ENCODE measurements at regions of chr1 and their contacts with region 1.

Region 1: GRCh38 chr1:114346480-114347029 is 164.4 kb downstream of the TRIM33 start:
- DNase-seq: peak; percentile 93 to 99 (median 97)
- H3K4me3 ChIP-seq: peak overlapping the region; percentile 54 to 71
- H3K4me3 Mint-ChIP-seq: peak overlapping the region; percentile 86 to 98 (median 94)
- H3K27ac ChIP-seq: no peak overlapping the region
- H3K27ac Mint-ChIP-seq: peak overlapping the region; percentile 81 to 98 (median 97)
- H3K4me1 ChIP-seq: peaks cover 46% of the 10 kb centered on the region
- H3K4me1 Mint-ChIP-seq: peaks cover 19 to 49% (median 35%) of the 10 kb centered on the region in 4 donors
- H3K27me3 ChIP-seq: no peaks in the 10 kb centered on the region
- H3K27me3 Mint-ChIP-seq: no peaks in the 10 kb centered on the region

Region 2: DNA sequence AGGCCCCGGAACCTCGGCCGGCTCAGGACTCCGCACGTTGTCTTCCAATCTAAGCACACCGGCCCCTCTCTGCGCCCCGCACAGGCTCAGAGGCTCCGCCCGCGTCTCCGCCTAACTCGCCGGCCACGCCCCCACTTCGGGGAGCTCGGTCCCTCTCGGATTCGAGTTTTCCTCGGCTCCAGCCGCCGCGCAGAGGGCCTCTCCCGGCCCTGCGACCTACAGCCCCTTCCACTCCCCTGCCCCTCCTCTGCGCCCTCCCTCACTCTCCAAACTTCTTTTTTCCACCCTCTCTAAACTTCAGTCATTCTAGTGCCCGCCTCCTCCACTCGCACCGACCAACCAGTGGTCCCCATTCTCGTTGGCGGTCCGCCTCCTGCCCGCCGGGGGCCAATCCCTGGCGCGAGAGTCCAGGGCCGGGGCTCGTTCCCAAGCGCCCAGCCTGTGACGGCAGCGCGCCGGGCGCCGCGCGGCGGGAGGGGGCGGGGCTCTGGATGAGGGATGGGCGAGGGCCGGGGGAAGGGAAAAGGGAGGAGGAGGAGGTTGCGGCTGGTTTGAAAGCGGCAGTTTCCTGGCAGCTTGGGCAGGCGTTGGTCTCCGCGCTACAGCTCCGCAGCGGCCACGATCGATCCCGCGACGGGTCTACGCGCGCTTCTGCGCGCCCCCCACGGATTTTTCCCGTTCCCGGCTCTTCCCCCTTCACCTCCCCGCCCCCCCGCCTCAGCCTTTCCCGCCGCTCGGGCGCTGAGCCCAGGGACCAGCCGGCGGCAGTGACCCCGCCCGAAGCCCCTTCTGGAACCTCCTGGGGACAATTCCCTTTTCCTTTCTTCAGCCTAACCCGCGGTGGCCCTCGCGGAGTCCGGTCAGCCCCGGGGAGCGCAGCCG is 956.4 kb before region 1 on chr1 and contains the start of gene MAGI3:
- CTCF ChIA-PET with region 1: no interaction called
- POLR2A ChIA-PET with region 1: no interaction called
- intact Hi-C with region 1: loop called (anchors 5 kb)
- DNase-seq: peak; percentile 92 to 94 (median 93)
- H3K4me3 ChIP-seq: peak within 1 kb of the TSS; percentile 44 to 89
- H3K4me3 Mint-ChIP-seq: peak within 1 kb of the TSS; percentile 88 to 98 (median 92)
- H3K27ac ChIP-seq: peak within 1 kb of the TSS; percentile 60
- H3K27ac Mint-ChIP-seq: peak within 1 kb of the TSS; percentile 80 to 95 (median 91)
- H3K4me1 ChIP-seq: peaks cover 30% of the 10 kb centered on the region
- H3K4me1 Mint-ChIP-seq: peaks cover 20 to 36% (median 23%) of the 10 kb centered on the region in 4 donors
- H3K27me3 ChIP-seq: no peaks in the 10 kb centered on the region
- H3K27me3 Mint-ChIP-seq: no peaks in the 10 kb centered on the region
- total RNA-seq, gene MAGI3: 6.5 to 6.7 TPM

Region 3: GRCh38 chr1:114330451-114330983 is 16.0 kb before region 1 on chr1:
- CTCF ChIA-PET with region 1: interaction called, 59 read pairs
- POLR2A ChIA-PET with region 1: interaction called, 79 read pairs
- intact Hi-C with region 1: loop called (anchors 1 kb)
- DNase-seq: peak; percentile 22 to 47 (median 35)
- H3K4me3 ChIP-seq: no peak overlapping the region
- H3K4me3 Mint-ChIP-seq: peak overlapping the region in 6 of 8 donors; percentile 4 to 74 (median 34)
- H3K27ac ChIP-seq: no peak overlapping the region
- H3K27ac Mint-ChIP-seq: peak overlapping the region in 6 of 7 donors; percentile 8 to 90 (median 86)
- H3K4me1 ChIP-seq: peaks cover 67% of the 10 kb centered on the region
- H3K4me1 Mint-ChIP-seq: peaks cover 44 to 73% (median 61%) of the 10 kb centered on the region in 4 donors
- H3K27me3 ChIP-seq: no peaks in the 10 kb centered on the region
- H3K27me3 Mint-ChIP-seq: peaks cover 0 to 1% of the 10 kb centered on the region in 2 donors

Region 4: DNA sequence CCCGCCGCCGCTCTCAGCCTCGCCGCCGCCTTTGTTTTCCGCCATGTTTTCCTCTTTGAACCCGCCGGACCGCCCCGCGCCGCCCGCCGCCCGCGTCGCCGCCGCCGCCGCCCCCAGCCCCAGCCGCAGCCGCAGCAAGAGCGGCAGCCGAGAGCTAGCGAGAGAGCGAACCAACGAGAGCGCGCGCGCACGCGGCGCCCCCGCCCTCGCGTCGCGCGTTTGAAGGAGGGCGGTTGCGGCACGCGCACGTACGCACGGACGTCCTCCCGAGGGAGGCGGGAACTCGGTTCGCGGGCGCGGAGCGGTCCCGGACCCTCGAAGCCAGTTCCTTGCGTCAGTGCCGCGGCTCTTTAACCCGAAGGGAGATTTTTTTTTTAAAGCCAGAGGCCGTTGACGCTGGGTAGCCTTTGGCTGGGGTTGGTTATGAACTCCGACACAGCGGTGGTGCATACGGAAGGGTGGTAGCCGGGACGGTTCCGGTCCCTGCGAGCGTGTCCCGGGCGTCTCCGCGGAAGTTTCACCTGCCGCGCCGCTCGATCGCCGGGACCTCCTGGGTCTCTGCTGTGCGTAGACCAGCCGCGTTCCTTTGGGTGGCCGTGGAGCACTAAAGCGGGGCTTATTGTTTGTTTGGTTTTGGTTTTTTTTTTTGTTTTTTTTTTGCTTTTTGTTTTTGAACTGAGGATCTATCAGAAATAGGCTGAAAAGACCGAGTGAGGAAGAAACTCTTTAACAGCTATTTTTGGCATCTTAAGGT is 164.7 kb after region 1 on chr1 and contains the start of gene TRIM33:
- CTCF ChIA-PET with region 1: interaction called, 6 read pairs
- POLR2A ChIA-PET with region 1: interaction called, 11 read pairs
- intact Hi-C with region 1: loop called (anchors 1 kb)
- DNase-seq: peak; percentile 91 to 95 (median 94)
- H3K4me3 ChIP-seq: peak within 1 kb of the TSS; percentile 75 to 85
- H3K4me3 Mint-ChIP-seq: peak within 1 kb of the TSS; percentile 97 to 100 (median 98)
- H3K27ac ChIP-seq: peak within 1 kb of the TSS; percentile 96
- H3K27ac Mint-ChIP-seq: peak within 1 kb of the TSS; percentile 97 to 100 (median 100)
- H3K4me1 ChIP-seq: peaks cover 41% of the 10 kb centered on the region
- H3K4me1 Mint-ChIP-seq: peaks cover 38 to 55% (median 47%) of the 10 kb centered on the region in 4 donors
- H3K27me3 ChIP-seq: no peaks in the 10 kb centered on the region
- H3K27me3 Mint-ChIP-seq: no peaks in the 10 kb centered on the region
- total RNA-seq, gene TRIM33: 50.6 to 54.4 TPM

Region 5: GRCh38 chr1:114670083-114671010 is 323.8 kb after region 1 on chr1:
- CTCF ChIA-PET with region 1: interaction called, 7 read pairs
- POLR2A ChIA-PET with region 1: interaction called, 3 read pairs
- intact Hi-C with region 1: loop called (anchors 1 kb)
- DNase-seq: peak; percentile 76 to 87 (median 78)
- H3K4me3 ChIP-seq: peak overlapping the region; percentile 25 to 76
- H3K4me3 Mint-ChIP-seq: peak overlapping the region; percentile 94 to 98 (median 96)
- H3K27ac ChIP-seq: peak overlapping the region; percentile 49
- H3K27ac Mint-ChIP-seq: peak overlapping the region; percentile 81 to 95 (median 91)
- H3K4me1 ChIP-seq: peaks cover 7% of the 10 kb centered on the region
- H3K4me1 Mint-ChIP-seq: peaks cover 6 to 14% (median 10%) of the 10 kb centered on the region in 4 donors
- H3K27me3 ChIP-seq: no peaks in the 10 kb centered on the region
- H3K27me3 Mint-ChIP-seq: peaks cover 5 to 7% of the 10 kb centered on the region in 2 donors

Region 6: GRCh38 chr1:115052454-115053083 is 706.0 kb after region 1 on chr1:
- CTCF ChIA-PET with region 1: interaction called, 6 read pairs
- POLR2A ChIA-PET with region 1: no interaction called
- intact Hi-C with region 1: loop called (anchors 1 kb)
- DNase-seq: peak; percentile 44 to 67 (median 61)
- H3K4me3 ChIP-seq: no peak overlapping the region
- H3K4me3 Mint-ChIP-seq: no peak overlapping the region
- H3K27ac ChIP-seq: no peak overlapping the region
- H3K27ac Mint-ChIP-seq: no peak overlapping the region
- H3K4me1 ChIP-seq: peaks cover 5% of the 10 kb centered on the region
- H3K4me1 Mint-ChIP-seq: peaks cover 0 to 5% (median 2%) of the 10 kb centered on the region in 4 donors
- H3K27me3 ChIP-seq: no peaks in the 10 kb centered on the region
- H3K27me3 Mint-ChIP-seq: no peaks in the 10 kb centered on the region